B cell (primary cell): ENCODE measurements at regions of chr22 and their contacts with region 1.

Region 1: DNA sequence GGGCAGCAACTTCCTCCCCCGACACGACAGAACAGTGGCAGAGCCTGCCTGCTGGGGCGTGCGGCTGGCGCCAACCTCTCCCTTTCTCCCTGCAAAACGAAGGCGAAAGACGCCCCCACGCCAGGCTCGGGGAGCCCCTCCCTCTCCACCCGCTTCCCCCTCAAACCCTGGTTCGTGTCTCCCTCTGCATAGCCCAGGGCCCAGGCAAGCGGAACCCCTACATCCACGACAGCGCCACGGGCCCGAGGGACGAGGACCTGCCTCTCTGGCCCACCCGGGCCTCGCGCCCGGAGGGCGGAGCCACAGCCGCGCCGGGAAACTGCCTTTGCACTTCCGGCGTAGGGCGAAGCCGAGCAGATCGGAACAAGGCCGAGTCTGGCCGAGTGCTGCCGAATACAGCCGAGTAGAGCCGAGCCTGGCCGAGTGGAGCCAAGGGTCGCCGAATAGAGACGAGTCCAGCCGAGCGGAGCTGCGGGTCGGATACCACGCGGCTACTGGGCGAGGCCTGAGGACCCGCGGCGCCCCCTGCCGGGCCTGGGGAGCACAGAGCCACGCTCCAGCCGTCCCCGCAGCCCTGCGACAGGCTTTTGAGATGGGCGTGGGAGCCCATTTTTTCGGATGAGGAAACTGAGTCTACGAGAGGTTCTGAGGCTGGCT is 11.2 kb upstream of the C1QTNF6 start:
- DNase-seq: peak; percentile 99
- ATAC-seq: peak; percentile 96
- H3K4me3 ChIP-seq: peak overlapping the region; percentile 59 to 89 (median 80)
- H3K4me3 Mint-ChIP-seq: peak overlapping the region; percentile 93
- H3K27ac ChIP-seq: peak overlapping the region; percentile 85 to 90
- H3K27ac Mint-ChIP-seq: peak overlapping the region; percentile 97
- H3K4me1 ChIP-seq: peaks cover 21 to 28% of the 10 kb centered on the region in 2 donors
- H3K4me1 Mint-ChIP-seq: peaks cover 26% of the 10 kb centered on the region
- H3K27me3 ChIP-seq: no peaks in the 10 kb centered on the region
- H3K27me3 Mint-ChIP-seq: no peaks in the 10 kb centered on the region
- CTCF ChIP-seq: peak; percentile 97

Region 2: GRCh38 chr22:37077884-37078485 is 121.2 kb before region 1 on chr22:
- CTCF ChIA-PET with region 1: interaction called, 10 read pairs
- POLR2A ChIA-PET with region 1: no interaction called
- intact Hi-C with region 1: loop called (anchors 1 kb)
- DNase-seq: peak; percentile 75
- ATAC-seq: peak; percentile 62
- H3K4me3 ChIP-seq: no peak overlapping the region
- H3K4me3 Mint-ChIP-seq: no peak overlapping the region
- H3K27ac ChIP-seq: no peak overlapping the region
- H3K27ac Mint-ChIP-seq: peak overlapping the region; percentile 39
- H3K4me1 ChIP-seq: peaks cover 4 to 15% of the 10 kb centered on the region in 2 donors
- H3K4me1 Mint-ChIP-seq: peaks cover 22% of the 10 kb centered on the region
- H3K27me3 ChIP-seq: peaks cover 0 to 21% (median 2%) of the 10 kb centered on the region in 4 experiments
- H3K27me3 Mint-ChIP-seq: peaks cover 18% of the 10 kb centered on the region
- CTCF ChIP-seq: peak; percentile 96

Region 3: GRCh38 chr22:37166675-37167066 is 32.6 kb before region 1 on chr22:
- CTCF ChIA-PET with region 1: interaction called, 33 read pairs
- POLR2A ChIA-PET with region 1: no interaction called
- intact Hi-C with region 1: loop called (anchors 1 kb)
- DNase-seq: peak; percentile 84
- ATAC-seq: peak; percentile 59
- H3K4me3 ChIP-seq: no peak overlapping the region
- H3K4me3 Mint-ChIP-seq: peak overlapping the region; percentile 57
- H3K27ac ChIP-seq: no peak overlapping the region
- H3K27ac Mint-ChIP-seq: peak overlapping the region; percentile 47
- H3K4me1 ChIP-seq: peaks cover 17 to 46% of the 10 kb centered on the region in 2 donors
- H3K4me1 Mint-ChIP-seq: peaks cover 40% of the 10 kb centered on the region
- H3K27me3 ChIP-seq: no peaks in the 10 kb centered on the region
- H3K27me3 Mint-ChIP-seq: peaks cover 4% of the 10 kb centered on the region
- CTCF ChIP-seq: peak; percentile 92

Region 4: DNA sequence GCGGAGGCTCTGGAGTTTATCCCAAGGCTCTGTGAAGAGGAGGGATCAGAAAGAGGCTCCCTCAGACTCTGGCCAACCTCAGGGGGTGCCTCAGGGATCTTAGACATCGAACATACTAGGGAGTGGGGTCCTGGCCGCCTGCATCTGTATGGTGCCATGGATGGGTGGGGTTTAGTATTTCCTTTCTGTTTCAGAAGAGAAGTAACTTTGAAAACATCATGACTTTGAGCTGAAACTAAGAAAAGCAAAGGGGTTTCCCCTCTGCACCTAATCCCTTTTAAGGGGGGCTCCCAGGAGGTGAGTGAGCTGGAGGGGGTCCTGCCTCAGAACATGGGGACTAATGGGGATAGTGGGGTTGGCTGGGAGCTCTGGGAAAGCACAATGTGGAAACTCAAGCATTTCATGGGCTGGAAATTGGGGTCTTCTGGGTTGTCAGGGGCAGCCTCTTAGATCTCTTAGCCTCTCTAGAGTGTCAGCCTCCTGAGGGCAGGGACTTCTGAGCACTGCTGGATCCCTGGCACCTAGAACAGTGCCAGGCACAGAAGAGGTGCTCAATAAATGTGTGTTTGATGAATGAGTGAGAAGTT is 24.8 kb after region 1 on chr22:
- CTCF ChIA-PET with region 1: interaction called, 74 read pairs
- POLR2A ChIA-PET with region 1: interaction called, 17 read pairs
- intact Hi-C with region 1: loop called (anchors 1 kb)
- DNase-seq: peak; percentile 79
- ATAC-seq: peak; percentile 61
- H3K4me3 ChIP-seq: peak overlapping the region in 2 of 5 experiments; percentile 5 to 8
- H3K4me3 Mint-ChIP-seq: peak overlapping the region; percentile 71
- H3K27ac ChIP-seq: peak overlapping the region; percentile 87 to 93
- H3K27ac Mint-ChIP-seq: peak overlapping the region; percentile 98
- H3K4me1 ChIP-seq: peaks cover 91 to 96% of the 10 kb centered on the region in 2 donors
- H3K4me1 Mint-ChIP-seq: peaks cover 86% of the 10 kb centered on the region
- H3K27me3 ChIP-seq: no peaks in the 10 kb centered on the region
- H3K27me3 Mint-ChIP-seq: no peaks in the 10 kb centered on the region
- CTCF ChIP-seq: no peak

Region 5: DNA sequence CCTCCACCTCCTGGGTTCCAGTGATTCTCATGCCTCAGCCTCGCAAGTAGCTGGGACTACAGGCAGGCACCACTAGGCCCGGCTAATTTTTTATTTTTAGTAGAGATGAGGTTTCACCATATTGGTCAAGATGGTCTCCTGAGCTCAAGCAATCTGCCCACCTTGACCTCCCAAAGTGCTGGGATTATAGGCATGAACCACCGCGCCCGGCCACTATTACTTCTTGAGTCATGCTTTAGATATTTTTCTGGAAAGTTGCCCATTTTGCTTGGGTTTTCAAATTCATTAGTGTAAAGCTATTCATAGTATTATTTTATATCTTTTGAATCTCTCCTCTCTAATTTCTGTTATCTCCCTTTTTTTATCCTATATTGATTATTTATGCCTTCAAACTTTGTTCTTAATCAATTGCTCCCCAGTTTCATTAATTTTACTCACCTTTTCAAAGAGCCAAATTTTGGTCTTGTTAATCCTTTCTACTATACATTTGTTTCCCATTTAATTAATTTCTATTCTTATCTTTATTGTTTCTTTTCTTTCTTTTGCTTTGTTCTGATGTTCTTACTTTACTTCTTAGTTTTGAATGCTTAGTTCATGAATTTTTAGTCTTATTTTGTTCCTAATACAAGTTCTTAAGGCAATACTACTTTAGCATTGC is 55.1 kb after region 1 on chr22:
- CTCF ChIA-PET with region 1: interaction called, 119 read pairs
- POLR2A ChIA-PET with region 1: no interaction called
- intact Hi-C with region 1: no loop called
- DNase-seq: no peak
- ATAC-seq: no peak
- H3K4me3 ChIP-seq: no peak overlapping the region
- H3K4me3 Mint-ChIP-seq: no peak overlapping the region
- H3K27ac ChIP-seq: no peak overlapping the region
- H3K27ac Mint-ChIP-seq: no peak overlapping the region
- H3K4me1 ChIP-seq: peaks cover 14 to 18% of the 10 kb centered on the region in 2 donors
- H3K4me1 Mint-ChIP-seq: peaks cover 26% of the 10 kb centered on the region
- H3K27me3 ChIP-seq: no peaks in the 10 kb centered on the region
- H3K27me3 Mint-ChIP-seq: no peaks in the 10 kb centered on the region
- CTCF ChIP-seq: no peak